ENCODE measurements at regions of chr6 and their contacts with region 1.

Region 1: GRCh38 chr6:152636609-152637295 is 410 bp downstream of the SYNE1 start:
- DNase-seq: peak; percentile 41 to 77 (median 59)
- ATAC-seq: peak in 3 of 4 donors; percentile 48 to 83 (median 82)
- H3K4me3 ChIP-seq: peak overlapping the region; percentile 50 to 86 (median 72)
- H3K27ac ChIP-seq: peak overlapping the region; percentile 37 to 87 (median 78)
- H3K4me1 ChIP-seq: peaks cover 0 to 38% (median 9%) of the 10 kb centered on the region in 12 donors
- H3K27me3 ChIP-seq: peaks cover 0 to 18% (median 0%) of the 10 kb centered on the region in 9 donors
- CTCF ChIP-seq: no peak
- POLR2A ChIP-seq: no peak

Region 2: GRCh38 chr6:152566103-152566875 is 70.5 kb before region 1 on chr6:
- intact Hi-C with region 1: loop called in 1 of 10 experiments (anchors 5 kb)
- DNase-seq: no peak
- ATAC-seq: no peak
- H3K4me3 ChIP-seq: no peak overlapping the region
- H3K27ac ChIP-seq: peak overlapping the region in 1 of 12 donors; percentile 32
- H3K4me1 ChIP-seq: peaks cover 0 to 8% (median 4%) of the 10 kb centered on the region in 12 donors
- H3K27me3 ChIP-seq: no peaks in the 10 kb centered on the region
- CTCF ChIP-seq: no peak
- POLR2A ChIP-seq: no peak

Region 3: GRCh38 chr6:152595505-152595904 is 41.2 kb before region 1 on chr6:
- intact Hi-C with region 1: loop called in 3 of 10 experiments (anchors 2 to 5 kb)
- DNase-seq: no peak
- ATAC-seq: no peak
- H3K4me3 ChIP-seq: no peak overlapping the region
- H3K27ac ChIP-seq: no peak overlapping the region
- H3K4me1 ChIP-seq: peaks cover 0 to 42% (median 10%) of the 10 kb centered on the region in 12 donors
- H3K27me3 ChIP-seq: no peaks in the 10 kb centered on the region
- CTCF ChIP-seq: peak in 7 of 12 donors; percentile 4 to 43 (median 36)
- POLR2A ChIP-seq: no peak

Region 4: GRCh38 chr6:153056261-153056660 is 419.5 kb after region 1 on chr6:
- intact Hi-C with region 1: no loop called
- DNase-seq: no peak
- ATAC-seq: no peak
- H3K4me3 ChIP-seq: no peak overlapping the region
- H3K27ac ChIP-seq: no peak overlapping the region
- H3K4me1 ChIP-seq: no peaks in the 10 kb centered on the region
- H3K27me3 ChIP-seq: no peaks in the 10 kb centered on the region
- CTCF ChIP-seq: no peak
- POLR2A ChIP-seq: no peak

Measured in heart left ventricle (tissue), 16 donors.